IMR-90 (cell line): ENCODE measurements at regions of chr20 and their contacts with region 1.

Region 1: DNA sequence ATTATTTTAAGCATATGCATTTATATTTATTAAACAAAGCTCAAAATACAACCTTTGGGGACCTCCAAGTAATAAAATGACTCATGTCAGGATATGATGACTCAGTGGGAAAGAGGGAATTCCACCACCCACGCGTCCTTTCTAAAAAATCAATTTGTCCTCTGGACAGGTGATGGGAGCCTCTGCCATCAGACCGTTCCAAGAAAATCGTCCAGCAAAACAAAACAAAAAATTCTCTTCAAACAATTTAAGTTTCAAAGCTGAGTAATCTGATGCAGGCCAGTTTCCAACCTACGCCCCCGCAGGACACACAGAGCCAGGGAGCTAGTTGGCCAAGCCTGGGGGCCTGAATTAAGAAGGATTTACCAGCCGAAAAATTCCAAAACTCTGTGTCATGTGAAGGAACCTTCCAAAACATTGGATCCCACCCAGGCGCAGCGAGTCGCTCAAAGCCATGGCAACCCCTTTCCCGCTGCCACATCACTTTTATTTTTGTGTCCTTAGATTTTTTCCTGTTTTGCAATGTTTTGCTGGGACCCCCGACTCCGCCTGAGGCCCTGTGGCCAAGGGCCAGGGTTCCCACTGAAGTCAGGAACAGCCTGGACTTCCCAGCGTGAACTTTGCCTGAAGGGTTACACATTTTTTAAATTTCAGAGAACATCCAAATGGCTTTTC is 95.3 kb downstream of the NFATC2 start:
- DNase-seq: peak; percentile 98
- ATAC-seq: peak; percentile 88
- H3K4me3 ChIP-seq: no peak overlapping the region
- H3K27ac ChIP-seq: peak overlapping the region; percentile 18
- H3K4me1 ChIP-seq: peaks cover 12% of the 10 kb centered on the region
- H3K27me3 ChIP-seq: no peaks in the 10 kb centered on the region
- CTCF ChIP-seq: no peak
- POLR2A ChIP-seq: no peak
- RAD21 ChIP-seq: peak; percentile 9; the same call in 1 of the 2 replicates

Region 2: GRCh38 chr20:51431321-51431720 is 15.9 kb before region 1 on chr20:
- CTCF ChIA-PET with region 1: no interaction called
- POLR2A ChIA-PET with region 1: no interaction called
- dilution Hi-C with region 1: no loop called
- in situ Hi-C with region 1: no loop called
- intact Hi-C with region 1: no loop called
- DNase-seq: no peak
- ATAC-seq: no peak
- H3K4me3 ChIP-seq: no peak overlapping the region
- H3K27ac ChIP-seq: no peak overlapping the region
- H3K4me1 ChIP-seq: peaks cover 4% of the 10 kb centered on the region
- H3K27me3 ChIP-seq: no peaks in the 10 kb centered on the region
- CTCF ChIP-seq: no peak
- POLR2A ChIP-seq: no peak
- RAD21 ChIP-seq: no peak

Region 3: DNA sequence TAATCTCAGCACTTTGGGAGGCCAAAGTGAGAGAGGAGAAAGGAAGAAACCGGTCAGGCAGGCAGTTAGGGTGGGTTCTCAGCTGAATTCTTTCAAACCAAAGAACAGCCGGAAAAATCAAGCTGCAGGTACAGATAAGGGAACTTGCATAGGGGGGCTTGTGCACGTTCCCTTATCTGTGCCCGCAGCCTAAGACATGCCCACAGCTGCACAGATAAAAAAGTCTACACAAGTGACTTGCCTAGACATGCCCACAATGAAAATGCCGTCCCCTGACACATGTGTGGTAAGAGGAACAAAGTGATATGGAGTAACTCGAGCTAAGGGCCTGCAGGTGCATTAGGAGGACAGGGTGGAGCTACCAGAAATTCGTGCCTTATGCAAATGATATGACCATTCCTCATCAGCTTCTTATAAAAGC is 530.9 kb after region 1 on chr20:
- CTCF ChIA-PET with region 1: no interaction called
- POLR2A ChIA-PET with region 1: interaction called, 11 read pairs
- dilution Hi-C with region 1: no loop called
- in situ Hi-C with region 1: no loop called
- intact Hi-C with region 1: no loop called
- DNase-seq: no peak
- ATAC-seq: no peak
- H3K4me3 ChIP-seq: no peak overlapping the region
- H3K27ac ChIP-seq: no peak overlapping the region
- H3K4me1 ChIP-seq: no peaks in the 10 kb centered on the region
- H3K27me3 ChIP-seq: no peaks in the 10 kb centered on the region
- CTCF ChIP-seq: no peak
- POLR2A ChIP-seq: no peak
- RAD21 ChIP-seq: no peak